ENCODE measurements at regions of chr7 and their contacts with region 1.

Region 1: DNA sequence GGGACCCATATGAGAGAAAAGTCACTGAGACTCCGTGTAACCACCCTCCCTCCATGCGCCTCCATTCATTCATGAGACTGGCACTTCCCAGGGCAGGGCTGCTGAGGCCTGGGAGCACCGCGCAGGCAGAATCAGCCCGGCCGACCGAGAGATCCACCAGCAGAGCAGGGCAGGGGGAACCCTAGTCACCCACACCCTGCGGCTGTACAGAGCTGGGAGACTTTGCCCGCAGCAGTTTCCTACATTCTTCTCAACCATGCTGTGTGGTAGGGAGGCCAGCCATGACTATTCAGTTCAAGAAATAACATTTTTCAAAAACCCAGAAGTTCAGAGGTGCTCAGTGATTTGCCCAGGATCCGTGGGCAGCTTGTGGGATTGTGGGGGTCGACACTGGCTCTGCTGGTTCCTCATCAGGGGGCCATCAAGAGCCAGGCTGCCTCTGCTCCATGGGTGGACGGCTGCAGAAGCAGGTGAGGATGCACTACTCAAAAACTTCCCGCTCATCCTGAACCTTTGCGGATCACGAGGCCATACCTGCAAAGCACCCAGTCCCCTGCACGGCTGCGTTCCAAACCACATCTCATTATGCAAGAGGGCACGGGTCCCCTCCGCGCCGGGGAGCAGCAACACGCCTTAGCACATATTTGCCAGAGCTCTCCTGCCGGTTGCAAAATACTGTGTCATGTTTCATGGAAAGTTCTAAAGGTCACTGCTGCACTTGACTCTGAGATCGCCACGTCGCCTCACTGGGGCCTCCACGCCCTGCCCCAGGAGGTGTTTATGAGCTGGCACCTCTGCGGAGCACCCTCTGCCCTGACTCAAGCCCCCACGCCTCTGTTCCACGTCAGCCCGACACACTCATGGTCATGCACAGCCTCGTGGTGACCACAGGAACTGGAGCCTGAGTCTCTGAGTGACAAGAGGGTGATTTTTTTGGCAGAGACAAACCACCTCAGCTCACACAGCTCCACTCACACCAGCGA is 132.0 kb downstream of the PRKAG2 start:
- DNase-seq: peak; percentile 96 to 100
- H3K4me3 ChIP-seq: no peak overlapping the region; the same call in 1 of the 2 replicates
- H3K27ac ChIP-seq: peak overlapping the region; percentile 81
- H3K4me1 ChIP-seq: peaks cover 44% of the 10 kb centered on the region
- H3K27me3 ChIP-seq: no peaks in the 10 kb centered on the region
- CTCF ChIP-seq: peak; percentile 70

Region 2: GRCh38 chr7:151181011-151181431 is 563.9 kb before region 1 on chr7:
- CTCF ChIA-PET with region 1: no interaction called
- POLR2A ChIA-PET with region 1: no interaction called
- intact Hi-C with region 1: no loop called
- DNase-seq: no peak
- H3K4me3 ChIP-seq: no peak overlapping the region
- H3K27ac ChIP-seq: no peak overlapping the region
- H3K4me1 ChIP-seq: no peaks in the 10 kb centered on the region
- H3K27me3 ChIP-seq: peaks cover 96% of the 10 kb centered on the region
- CTCF ChIP-seq: no peak

Region 3: DNA sequence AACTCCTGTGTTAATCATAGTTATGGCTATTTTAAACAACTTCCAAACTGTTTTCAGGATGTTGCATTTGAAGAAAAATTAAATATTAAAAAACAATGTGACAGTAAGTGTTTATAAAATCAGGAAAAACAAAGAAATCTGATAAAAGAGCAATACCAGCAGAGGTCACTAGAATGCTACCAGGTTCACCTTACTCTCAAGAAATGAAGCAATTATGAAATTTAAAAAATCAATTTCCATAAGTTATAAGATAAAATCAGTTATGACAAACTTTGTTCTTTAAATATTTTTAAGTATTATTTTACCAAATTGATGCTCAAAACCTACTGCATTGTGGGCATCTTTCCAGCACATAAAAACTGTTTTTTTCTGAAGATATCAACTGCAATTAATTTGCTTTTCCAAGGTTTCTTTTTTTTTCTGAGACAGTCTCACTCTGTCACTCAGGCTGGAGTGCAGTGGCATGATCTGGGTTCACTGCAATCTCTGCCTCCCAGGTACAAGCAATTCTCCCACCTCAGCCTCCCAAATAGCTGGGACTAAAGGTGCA is 174.5 kb before region 1 on chr7:
- CTCF ChIA-PET with region 1: no interaction called
- POLR2A ChIA-PET with region 1: no interaction called
- intact Hi-C with region 1: loop called (anchors 1 kb)
- DNase-seq: no peak
- H3K4me3 ChIP-seq: no peak overlapping the region
- H3K27ac ChIP-seq: no peak overlapping the region
- H3K4me1 ChIP-seq: no peaks in the 10 kb centered on the region
- H3K27me3 ChIP-seq: no peaks in the 10 kb centered on the region
- CTCF ChIP-seq: peak; percentile 86

Region 4: GRCh38 chr7:151694828-151695580 is 49.9 kb before region 1 on chr7:
- CTCF ChIA-PET with region 1: interaction called, 7 read pairs
- POLR2A ChIA-PET with region 1: interaction called, 7 read pairs
- intact Hi-C with region 1: loop called (anchors 1 kb)
- DNase-seq: peak; percentile 76 to 97
- H3K4me3 ChIP-seq: no peak overlapping the region
- H3K27ac ChIP-seq: peak overlapping the region; percentile 54
- H3K4me1 ChIP-seq: peaks cover 65% of the 10 kb centered on the region
- H3K27me3 ChIP-seq: no peaks in the 10 kb centered on the region
- CTCF ChIP-seq: no peak

Region 5: GRCh38 chr7:151727579-151728285 is 17.2 kb before region 1 on chr7:
- CTCF ChIA-PET with region 1: no interaction called
- POLR2A ChIA-PET with region 1: interaction called, 8 read pairs
- intact Hi-C with region 1: loop called (anchors 1 kb)
- DNase-seq: peak; percentile 97 to 100
- H3K4me3 ChIP-seq: peak overlapping the region; percentile 39; the same call in 1 of the 2 replicates
- H3K27ac ChIP-seq: peak overlapping the region; percentile 56
- H3K4me1 ChIP-seq: peaks cover 26% of the 10 kb centered on the region
- H3K27me3 ChIP-seq: no peaks in the 10 kb centered on the region
- CTCF ChIP-seq: no peak

Measured in PC-9 (cell line).